Activated CD8-positive, alpha-beta memory T cell treated with anti-CD3 and anti-CD28 coated beads, Interleukin-2, amount 10 ng/mL, durations not matched to agents 7 days and 5 days (primary cell): ENCODE measurements at regions of chr10 and their contacts with region 1.

Region 1: DNA sequence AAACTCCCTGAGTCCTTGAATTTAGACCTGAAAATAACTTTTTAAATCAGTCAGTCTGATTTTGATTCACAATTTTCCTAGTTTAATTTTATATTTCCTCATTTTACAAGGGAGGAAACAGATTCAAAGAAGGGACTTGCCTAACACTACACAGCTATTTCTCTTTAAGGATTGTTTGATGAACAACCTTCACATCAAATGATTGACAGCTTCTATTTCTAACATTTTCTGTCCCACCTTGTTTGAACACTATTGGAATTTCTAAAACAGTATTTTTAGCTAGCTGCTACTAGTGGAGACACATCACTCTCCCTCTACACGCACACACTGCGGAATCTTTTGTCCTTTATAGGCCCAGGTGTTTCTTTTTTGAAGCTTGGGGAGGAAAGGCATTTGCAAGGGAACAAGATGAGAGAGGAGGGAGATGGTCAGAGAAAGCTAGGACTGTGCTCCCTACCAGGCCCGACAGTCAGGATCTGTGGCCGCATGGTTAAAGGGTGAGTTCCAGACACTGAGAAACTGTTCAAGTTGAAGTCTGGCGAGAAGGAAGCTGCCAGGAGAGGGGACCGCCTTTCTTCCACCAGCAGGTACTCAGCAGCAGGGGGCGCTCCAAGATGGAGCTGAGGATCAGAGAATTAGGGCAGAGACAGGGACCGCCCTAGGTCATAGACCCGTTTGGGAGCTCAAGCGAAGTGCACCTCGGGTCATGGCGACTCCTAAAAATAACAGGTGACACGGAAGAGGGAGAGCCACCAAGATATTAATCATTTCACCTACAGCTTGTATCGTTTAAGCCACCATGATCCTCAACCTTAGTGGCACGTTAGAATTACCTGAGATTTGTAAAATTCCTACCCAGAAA is 49.7 kb downstream of the DNAJC12 start:
- DNase-seq: peak; percentile 87
- ATAC-seq: peak; percentile 67
- H3K4me3 Mint-ChIP-seq: peak overlapping the region; percentile 5
- H3K27ac Mint-ChIP-seq: peak overlapping the region; percentile 1
- H3K4me1 Mint-ChIP-seq: peaks cover 55% of the 10 kb centered on the region
- H3K27me3 Mint-ChIP-seq: no peaks in the 10 kb centered on the region

Region 2: GRCh38 chr10:67815571-67816059 is 27.4 kb after region 1 on chr10:
- CTCF ChIA-PET with region 1: interaction called, 10 read pairs
- DNase-seq: no peak
- ATAC-seq: peak; percentile 39
- H3K4me3 Mint-ChIP-seq: peak overlapping the region; percentile 0
- H3K27ac Mint-ChIP-seq: peak overlapping the region; percentile 39
- H3K4me1 Mint-ChIP-seq: peaks cover 22% of the 10 kb centered on the region
- H3K27me3 Mint-ChIP-seq: no peaks in the 10 kb centered on the region

Region 3: DNA sequence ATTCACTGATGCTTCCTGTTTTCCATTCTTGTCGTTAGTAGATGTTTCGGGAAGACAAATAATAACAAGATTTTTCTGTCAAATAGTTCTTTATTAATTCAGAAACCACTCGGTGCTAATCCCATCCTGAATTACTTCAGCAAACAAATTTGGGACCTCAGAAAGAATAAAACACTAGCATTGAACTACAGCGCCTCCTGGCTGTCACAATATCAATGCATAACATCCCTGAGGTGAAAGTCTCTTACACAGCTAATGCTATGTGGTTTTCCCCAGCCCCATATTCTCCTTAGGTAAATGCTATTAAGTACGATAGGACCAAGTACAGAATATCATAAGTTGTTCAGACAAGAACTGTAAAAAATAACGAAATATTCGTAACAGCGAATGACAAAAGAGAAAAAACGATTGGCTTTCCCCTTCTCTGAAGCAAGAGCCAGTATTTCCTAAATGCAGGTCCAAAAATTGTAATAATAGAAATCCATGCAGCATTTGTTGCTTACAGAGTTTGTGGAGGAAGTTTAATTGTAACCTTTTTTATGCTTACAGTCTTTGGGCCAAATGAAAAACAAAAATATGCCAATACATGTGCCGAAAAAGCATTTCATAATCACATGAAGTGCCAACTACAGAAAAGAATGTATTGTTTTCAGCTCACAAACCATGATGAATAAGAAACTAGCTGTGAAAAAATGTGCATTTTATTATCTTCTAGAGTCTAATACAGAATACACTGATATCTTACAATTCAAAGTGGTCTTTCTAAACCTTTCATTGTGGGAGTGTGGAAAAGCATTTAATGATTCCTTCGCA is 368.3 kb after region 1 on chr10:
- CTCF ChIA-PET with region 1: interaction called, 22 read pairs
- DNase-seq: peak; percentile 71
- ATAC-seq: no peak
- H3K4me3 Mint-ChIP-seq: no peak overlapping the region
- H3K27ac Mint-ChIP-seq: no peak overlapping the region
- H3K4me1 Mint-ChIP-seq: peaks cover 4% of the 10 kb centered on the region
- H3K27me3 Mint-ChIP-seq: peaks cover 2% of the 10 kb centered on the region